ENCODE measurements at regions of chr4 and their contacts with region 1.

Region 1: DNA sequence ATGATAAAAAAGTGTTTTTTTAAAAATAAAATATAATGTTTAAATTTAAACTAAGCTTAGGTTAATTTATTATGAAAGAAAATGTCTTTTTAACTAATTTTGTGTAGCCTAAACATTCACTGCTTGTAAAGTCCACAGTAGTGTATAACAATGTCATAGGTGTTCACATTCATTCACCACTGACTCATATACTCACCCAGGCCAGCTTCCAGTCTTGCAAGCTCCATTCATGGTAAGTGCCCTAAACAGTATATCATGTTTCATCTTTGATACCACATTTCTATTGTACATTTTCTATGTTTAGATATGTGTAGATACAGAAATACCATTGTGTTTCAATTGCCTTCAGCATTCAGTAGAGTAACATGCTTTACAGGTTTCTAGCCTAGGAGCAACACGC is 530.3 kb downstream of the EPHA5 start:
- DNase-seq: no peak
- H3K4me3 ChIP-seq: no peak overlapping the region
- H3K27ac ChIP-seq: no peak overlapping the region
- H3K4me1 ChIP-seq: no peaks in the 10 kb centered on the region
- H3K27me3 ChIP-seq: no peaks in the 10 kb centered on the region
- CTCF ChIP-seq: no peak
- EP300 ChIP-seq: no peak
- POLR2A ChIP-seq: no peak

Region 2: DNA sequence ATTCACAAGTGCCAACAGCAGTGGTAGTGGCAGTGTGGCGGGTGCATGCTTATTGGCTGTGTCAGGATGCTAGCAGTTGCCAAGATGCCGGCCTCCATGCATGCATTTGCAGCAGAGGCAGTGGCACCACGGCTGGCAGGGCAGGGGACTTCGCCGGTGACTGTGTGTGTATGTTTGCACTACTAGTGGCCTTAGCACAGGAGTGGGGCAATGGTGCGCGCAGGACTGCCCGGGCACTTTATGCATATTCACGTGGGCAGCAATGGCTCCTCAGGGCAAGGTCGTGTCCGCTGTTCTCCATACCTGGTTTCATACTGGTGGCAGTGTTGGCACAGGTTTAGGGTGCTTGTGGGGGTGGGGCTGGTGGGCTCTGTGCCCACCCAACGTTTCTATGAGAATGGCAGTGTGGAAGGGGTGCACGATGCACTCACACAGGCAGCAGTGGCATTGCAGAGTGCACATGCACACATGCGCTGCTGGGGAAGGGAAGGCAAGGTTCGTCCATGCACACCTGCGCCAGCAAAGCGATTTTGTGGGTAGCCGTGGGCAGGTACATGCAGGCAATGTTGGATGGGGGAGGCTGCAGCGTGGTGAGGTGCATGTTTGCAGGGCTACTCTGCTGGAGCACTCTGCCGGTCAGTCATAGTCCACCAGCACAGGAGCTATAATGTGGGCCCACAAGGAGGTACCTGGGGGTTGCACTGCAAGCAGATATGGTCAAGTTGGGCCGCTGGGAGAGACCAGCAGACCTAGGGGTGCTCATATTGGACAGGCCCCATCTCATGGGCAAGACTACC is 391.9 kb before region 1 on chr4:
- in situ Hi-C with region 1: no loop called
- intact Hi-C with region 1: loop called (anchors 5 kb)
- DNase-seq: no peak
- H3K4me3 ChIP-seq: no peak overlapping the region
- H3K27ac ChIP-seq: no peak overlapping the region
- H3K4me1 ChIP-seq: no peaks in the 10 kb centered on the region
- H3K27me3 ChIP-seq: no peaks in the 10 kb centered on the region
- CTCF ChIP-seq: no peak
- EP300 ChIP-seq: no peak
- POLR2A ChIP-seq: no peak

Region 3: DNA sequence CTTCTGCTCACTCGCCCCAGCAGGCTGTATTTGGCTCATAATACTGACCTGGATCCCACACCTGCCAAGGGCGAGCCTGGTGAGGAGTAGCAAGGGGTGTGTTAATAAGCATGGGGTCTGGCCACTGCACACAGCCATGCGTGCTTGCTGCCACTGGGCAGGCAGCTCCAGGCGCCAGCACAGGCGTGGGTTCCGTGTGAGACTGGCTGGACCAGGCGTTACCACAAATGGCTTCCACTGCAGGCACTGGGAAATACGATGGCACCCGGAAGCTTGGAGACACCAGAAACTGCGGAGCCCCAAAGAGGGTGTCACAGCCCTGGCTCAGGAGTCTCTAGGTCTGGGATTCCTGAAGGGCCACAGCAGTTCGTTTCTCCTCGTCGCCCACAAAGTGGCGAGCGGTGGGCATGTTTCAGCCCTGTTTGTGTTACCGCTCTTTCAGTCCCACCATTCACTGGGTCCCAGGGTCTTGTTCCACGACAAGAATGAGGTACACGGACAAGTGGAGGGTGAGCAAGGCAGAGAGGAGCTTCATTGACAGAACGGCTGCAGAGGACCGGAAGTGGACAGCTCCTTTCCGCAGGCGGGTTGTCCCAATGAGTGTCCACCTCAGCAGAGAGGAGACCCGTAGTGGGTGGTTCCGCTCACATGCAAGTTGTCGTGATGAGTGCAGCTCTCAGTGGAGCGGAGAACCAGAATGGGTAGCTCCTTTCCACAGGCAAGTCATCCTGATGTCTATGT is 101.4 kb after region 1 on chr4:
- in situ Hi-C with region 1: no loop called
- intact Hi-C with region 1: no loop called
- DNase-seq: no peak
- H3K4me3 ChIP-seq: no peak overlapping the region
- H3K27ac ChIP-seq: no peak overlapping the region
- H3K4me1 ChIP-seq: no peaks in the 10 kb centered on the region
- H3K27me3 ChIP-seq: no peaks in the 10 kb centered on the region
- CTCF ChIP-seq: no peak
- EP300 ChIP-seq: no peak
- POLR2A ChIP-seq: no peak